Spleen (tissue), 13 donors: ENCODE measurements at regions of chr9 and their contacts with region 1.

Region 1: GRCh38 chr9:130461218-130461630 is 16.5 kb downstream of the ASS1 start:
- DNase-seq: peak; percentile 89
- H3K4me3 ChIP-seq: no peak overlapping the region
- H3K27ac ChIP-seq: no peak overlapping the region
- H3K4me1 ChIP-seq: peaks cover 0 to 6% (median 4%) of the 10 kb centered on the region in 6 donors
- H3K27me3 ChIP-seq: peaks cover 0 to 80% (median 7%) of the 10 kb centered on the region in 7 donors
- CTCF ChIP-seq: peak; percentile 66 to 96 (median 91)
- POLR2A ChIP-seq: no peak

Region 2: GRCh38 chr9:129995409-129996160 is 465.6 kb before region 1 on chr9:
- intact Hi-C with region 1: no loop called
- DNase-seq: no peak
- H3K4me3 ChIP-seq: peak overlapping the region in 2 of 8 donors; percentile 4 to 30
- H3K27ac ChIP-seq: peak overlapping the region; percentile 44 to 91 (median 82)
- H3K4me1 ChIP-seq: peaks cover 26 to 99% (median 91%) of the 10 kb centered on the region in 6 donors
- H3K27me3 ChIP-seq: no peaks in the 10 kb centered on the region
- CTCF ChIP-seq: no peak
- POLR2A ChIP-seq: no peak

Region 3: GRCh38 chr9:130682490-130683121 is 221.4 kb after region 1 on chr9:
- intact Hi-C with region 1: loop called (anchors 2 kb)
- DNase-seq: peak; percentile 90
- H3K4me3 ChIP-seq: peak overlapping the region; percentile 23 to 88 (median 60)
- H3K27ac ChIP-seq: no peak overlapping the region
- H3K4me1 ChIP-seq: peaks cover 13 to 22% (median 18%) of the 10 kb centered on the region in 6 donors
- H3K27me3 ChIP-seq: peaks cover 5 to 56% (median 21%) of the 10 kb centered on the region in 7 donors
- CTCF ChIP-seq: peak; percentile 60 to 88 (median 76)
- POLR2A ChIP-seq: no peak

Region 4: GRCh38 chr9:131087354-131087893 is 626.2 kb after region 1 on chr9:
- intact Hi-C with region 1: no loop called
- DNase-seq: no peak
- H3K4me3 ChIP-seq: peak overlapping the region in 1 of 8 donors; percentile 9
- H3K27ac ChIP-seq: peak overlapping the region in 5 of 8 donors; percentile 41 to 69 (median 60)
- H3K4me1 ChIP-seq: peaks cover 0 to 55% (median 15%) of the 10 kb centered on the region in 6 donors
- H3K27me3 ChIP-seq: no peaks in the 10 kb centered on the region
- CTCF ChIP-seq: no peak
- POLR2A ChIP-seq: no peak